Caco-2 (cell line): ENCODE measurements at regions of chr6 and their contacts with region 1.

Region 1: GRCh38 chr6:143575440-143575839 is 63.9 kb upstream of the FUCA2 start:
- DNase-seq: peak; percentile 48 to 66
- H3K4me3 ChIP-seq: no peak overlapping the region
- H3K4me3 Mint-ChIP-seq: no peak overlapping the region
- H3K27ac Mint-ChIP-seq: no peak overlapping the region
- H3K4me1 ChIP-seq: no peaks in the 10 kb centered on the region
- H3K4me1 Mint-ChIP-seq: peaks cover 8% of the 10 kb centered on the region
- H3K27me3 ChIP-seq: no peaks in the 10 kb centered on the region
- H3K27me3 Mint-ChIP-seq: no peaks in the 10 kb centered on the region
- CTCF ChIP-seq: peak; percentile 77 to 84

Region 2: DNA sequence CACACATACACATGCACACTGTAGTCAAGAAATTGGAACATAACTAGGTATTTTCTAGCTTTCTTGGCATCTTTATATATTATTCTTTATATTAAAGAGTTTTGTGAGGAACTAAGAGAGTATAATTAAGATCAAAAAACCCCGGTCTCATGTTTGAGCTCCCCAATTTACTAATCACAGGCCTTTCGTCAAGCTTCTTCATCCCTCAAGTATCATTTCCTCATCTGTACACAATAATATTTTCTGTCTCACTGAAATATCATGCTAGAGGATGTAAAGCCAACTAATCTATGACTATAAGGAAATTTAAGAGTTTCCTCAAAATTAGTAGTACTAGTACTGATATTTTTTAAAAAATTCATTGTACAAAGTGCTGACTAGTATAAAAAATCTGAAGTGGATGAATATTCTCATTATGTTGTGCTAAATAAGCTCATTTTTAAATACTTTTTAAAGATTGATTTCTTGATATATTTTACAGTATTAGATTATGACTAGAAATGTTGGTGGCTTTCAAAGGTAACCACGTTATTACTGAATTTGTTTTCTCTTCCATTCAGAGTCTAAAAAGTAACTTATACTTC is 96.9 kb before region 1 on chr6:
- CTCF ChIA-PET with region 1: no interaction called
- POLR2A ChIA-PET with region 1: no interaction called
- intact Hi-C with region 1: no loop called
- DNase-seq: no peak
- H3K4me3 ChIP-seq: no peak overlapping the region
- H3K4me3 Mint-ChIP-seq: no peak overlapping the region
- H3K27ac Mint-ChIP-seq: no peak overlapping the region
- H3K4me1 ChIP-seq: no peaks in the 10 kb centered on the region
- H3K4me1 Mint-ChIP-seq: no peaks in the 10 kb centered on the region
- H3K27me3 ChIP-seq: no peaks in the 10 kb centered on the region
- H3K27me3 Mint-ChIP-seq: no peaks in the 10 kb centered on the region
- CTCF ChIP-seq: no peak

Region 3: GRCh38 chr6:143510991-143511891 is 64.2 kb before region 1 on chr6 and contains the start of gene FUCA2:
- CTCF ChIA-PET with region 1: no interaction called
- POLR2A ChIA-PET with region 1: no interaction called
- intact Hi-C with region 1: loop called (anchors 1 kb)
- DNase-seq: peak; percentile 91 to 93
- H3K4me3 ChIP-seq: peak within 1 kb of the TSS; percentile 60
- H3K4me3 Mint-ChIP-seq: peak within 1 kb of the TSS; percentile 97
- H3K27ac Mint-ChIP-seq: peak within 1 kb of the TSS; percentile 91
- H3K4me1 ChIP-seq: peaks cover 11% of the 10 kb centered on the region
- H3K4me1 Mint-ChIP-seq: peaks cover 16% of the 10 kb centered on the region
- H3K27me3 ChIP-seq: no peaks in the 10 kb centered on the region
- H3K27me3 Mint-ChIP-seq: no peaks in the 10 kb centered on the region
- CTCF ChIP-seq: peak in 1 of 2 experiments; percentile 17
- total RNA-seq, gene FUCA2: 102 and 119 TPM in 2 replicates

Region 4: DNA sequence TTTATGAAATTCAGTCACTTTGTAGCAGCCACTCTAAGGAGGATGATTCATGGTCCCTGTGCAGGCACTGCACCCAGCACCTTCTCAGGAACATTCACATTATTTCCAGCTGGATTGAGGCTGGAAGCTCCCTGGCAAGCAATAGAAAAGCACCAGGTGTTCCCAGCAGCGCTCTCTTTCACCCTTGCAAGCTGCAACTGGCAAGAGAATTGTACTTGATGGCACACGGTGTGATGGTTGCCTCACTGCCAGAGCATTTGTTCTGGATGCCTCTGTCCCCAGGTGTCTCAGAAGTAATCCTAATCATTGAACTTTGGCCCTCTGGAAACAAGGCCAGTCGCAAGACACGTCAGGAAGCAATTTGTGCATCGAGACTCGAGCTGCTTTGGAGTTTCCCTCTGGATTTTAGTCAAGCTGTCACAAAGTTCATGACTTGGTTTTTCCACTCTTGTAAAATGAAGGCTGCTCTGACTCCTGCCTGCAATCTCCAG is 77.4 kb after region 1 on chr6:
- CTCF ChIA-PET with region 1: interaction called, 3 read pairs
- POLR2A ChIA-PET with region 1: no interaction called
- intact Hi-C with region 1: loop called (anchors 5 kb)
- DNase-seq: peak; percentile 59 to 71
- H3K4me3 ChIP-seq: no peak overlapping the region
- H3K4me3 Mint-ChIP-seq: peak overlapping the region; percentile 51
- H3K27ac Mint-ChIP-seq: peak overlapping the region; percentile 84
- H3K4me1 ChIP-seq: peaks cover 43% of the 10 kb centered on the region
- H3K4me1 Mint-ChIP-seq: peaks cover 45% of the 10 kb centered on the region
- H3K27me3 ChIP-seq: no peaks in the 10 kb centered on the region
- H3K27me3 Mint-ChIP-seq: no peaks in the 10 kb centered on the region
- CTCF ChIP-seq: no peak

Region 5: DNA sequence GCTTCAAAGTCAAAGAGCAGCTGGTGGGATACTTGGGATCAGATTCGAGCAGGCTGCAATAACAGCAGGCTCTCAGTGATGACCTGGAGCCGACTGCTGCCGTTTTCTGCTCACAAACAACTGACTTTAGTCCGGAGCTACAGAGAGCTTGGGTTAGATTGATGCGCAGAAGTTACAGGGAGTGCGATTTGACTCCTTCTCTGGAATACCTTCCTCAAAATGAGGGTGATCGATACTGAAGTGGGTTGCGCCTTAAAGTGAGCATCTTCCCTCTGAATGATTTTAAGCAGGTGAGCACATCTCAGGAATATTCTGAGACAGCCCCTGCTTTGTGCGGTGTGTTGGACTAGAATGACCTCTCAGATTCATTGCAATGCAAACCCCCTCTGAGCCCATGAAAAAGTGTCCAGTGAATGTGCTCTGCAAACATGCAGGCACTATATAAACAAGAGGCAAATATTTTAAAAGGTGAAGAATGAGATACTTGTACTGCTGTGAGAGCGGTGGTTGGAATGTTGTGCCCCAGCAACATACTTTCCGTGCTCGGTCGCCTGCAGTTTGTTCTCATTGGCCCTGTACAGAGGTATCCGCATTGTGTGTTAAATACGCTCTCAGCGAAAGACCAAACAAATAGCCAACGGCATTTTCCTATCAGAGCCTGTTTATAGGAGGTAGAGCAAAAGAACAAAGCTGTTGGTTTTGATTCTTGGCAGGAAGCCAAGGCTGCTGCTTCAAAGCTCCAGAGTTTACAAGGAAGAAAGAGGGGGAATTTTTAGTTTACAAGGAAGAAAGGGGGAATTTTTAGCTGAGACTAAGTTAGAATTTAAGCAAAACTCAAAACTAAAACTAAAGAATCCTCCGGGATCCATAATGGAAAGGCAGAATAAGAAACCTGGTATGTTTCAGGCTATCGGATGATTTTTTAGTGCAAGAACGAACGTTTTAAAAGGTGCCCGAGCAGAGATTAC is 170.0 kb after region 1 on chr6:
- CTCF ChIA-PET with region 1: interaction called, 3 read pairs
- POLR2A ChIA-PET with region 1: no interaction called
- intact Hi-C with region 1: loop called (anchors 1 kb)
- DNase-seq: peak; percentile 81 to 89
- H3K4me3 ChIP-seq: peak overlapping the region; percentile 21
- H3K4me3 Mint-ChIP-seq: peak overlapping the region; percentile 69
- H3K27ac Mint-ChIP-seq: peak overlapping the region; percentile 95
- H3K4me1 ChIP-seq: peaks cover 62% of the 10 kb centered on the region
- H3K4me1 Mint-ChIP-seq: peaks cover 50% of the 10 kb centered on the region
- H3K27me3 ChIP-seq: no peaks in the 10 kb centered on the region
- H3K27me3 Mint-ChIP-seq: no peaks in the 10 kb centered on the region
- CTCF ChIP-seq: no peak

Region 6: DNA sequence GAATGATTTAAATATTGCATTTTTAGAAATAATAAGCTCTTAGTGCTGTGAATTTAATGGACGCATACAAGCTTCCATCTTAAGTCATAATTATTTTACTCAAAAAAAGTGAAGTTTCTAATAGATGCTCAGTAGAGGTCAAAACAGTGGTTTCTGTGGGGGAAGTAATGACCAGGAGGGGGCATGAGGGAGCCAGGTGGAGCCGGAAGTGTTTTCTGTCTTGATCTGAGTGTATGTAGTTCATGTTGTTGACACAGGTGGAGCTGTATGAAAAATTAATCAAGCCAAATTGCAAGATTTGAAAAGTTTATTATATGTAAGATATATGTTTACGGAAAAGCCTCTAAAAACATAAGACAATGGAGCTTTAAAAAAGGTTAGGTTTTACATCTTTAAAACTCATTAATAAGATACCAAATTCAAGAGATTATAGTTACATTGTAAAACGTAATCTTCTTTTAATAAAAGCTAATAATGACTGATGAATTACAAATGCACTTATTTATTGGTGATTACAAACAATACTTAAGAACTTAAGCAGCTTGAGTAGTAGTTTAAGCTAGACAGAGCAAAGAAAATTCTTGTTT is 364.7 kb after region 1 on chr6:
- CTCF ChIA-PET with region 1: interaction called, 14 read pairs
- POLR2A ChIA-PET with region 1: no interaction called
- intact Hi-C with region 1: loop called (anchors 1 kb)
- DNase-seq: peak; percentile 55 to 76
- H3K4me3 ChIP-seq: no peak overlapping the region
- H3K4me3 Mint-ChIP-seq: no peak overlapping the region
- H3K27ac Mint-ChIP-seq: no peak overlapping the region
- H3K4me1 ChIP-seq: no peaks in the 10 kb centered on the region
- H3K4me1 Mint-ChIP-seq: no peaks in the 10 kb centered on the region
- H3K27me3 ChIP-seq: no peaks in the 10 kb centered on the region
- H3K27me3 Mint-ChIP-seq: peaks cover 6% of the 10 kb centered on the region
- CTCF ChIP-seq: peak; percentile 85 to 93